HEK293 (cell line): ENCODE measurements at regions of chr16 and their contacts with region 1.

Region 1: DNA sequence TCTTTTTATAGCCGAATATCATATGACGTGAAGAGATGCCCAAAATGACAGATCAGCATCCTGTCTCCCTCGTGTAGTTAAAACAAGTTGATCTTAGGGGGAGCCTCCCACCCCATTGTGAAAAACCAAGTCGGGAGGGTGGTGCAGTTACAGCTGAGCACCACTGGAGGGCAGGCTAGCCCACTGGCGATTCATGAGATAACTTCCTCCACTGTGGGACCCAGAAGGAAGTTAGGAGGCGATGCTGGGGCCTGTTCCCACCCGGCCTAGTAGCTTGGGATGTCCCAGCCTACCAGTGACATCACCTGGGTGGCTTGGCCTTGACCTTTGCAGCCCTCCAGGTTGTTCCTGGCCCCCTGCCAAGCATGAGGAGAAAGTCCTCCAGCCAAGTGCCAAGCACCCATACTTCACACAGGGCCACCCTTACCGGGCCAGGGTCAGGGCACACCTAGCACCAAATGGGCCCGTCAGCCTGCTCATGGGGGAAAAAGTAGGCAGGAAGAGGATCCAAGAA is 8.1 kb upstream of the CPNE2 start:
- H3K4me3 ChIP-seq: no peak overlapping the region
- H3K27ac ChIP-seq: no peak overlapping the region
- H3K4me1 ChIP-seq: no peaks in the 10 kb centered on the region
- CTCF ChIP-seq: peak; percentile 90

Region 2: DNA sequence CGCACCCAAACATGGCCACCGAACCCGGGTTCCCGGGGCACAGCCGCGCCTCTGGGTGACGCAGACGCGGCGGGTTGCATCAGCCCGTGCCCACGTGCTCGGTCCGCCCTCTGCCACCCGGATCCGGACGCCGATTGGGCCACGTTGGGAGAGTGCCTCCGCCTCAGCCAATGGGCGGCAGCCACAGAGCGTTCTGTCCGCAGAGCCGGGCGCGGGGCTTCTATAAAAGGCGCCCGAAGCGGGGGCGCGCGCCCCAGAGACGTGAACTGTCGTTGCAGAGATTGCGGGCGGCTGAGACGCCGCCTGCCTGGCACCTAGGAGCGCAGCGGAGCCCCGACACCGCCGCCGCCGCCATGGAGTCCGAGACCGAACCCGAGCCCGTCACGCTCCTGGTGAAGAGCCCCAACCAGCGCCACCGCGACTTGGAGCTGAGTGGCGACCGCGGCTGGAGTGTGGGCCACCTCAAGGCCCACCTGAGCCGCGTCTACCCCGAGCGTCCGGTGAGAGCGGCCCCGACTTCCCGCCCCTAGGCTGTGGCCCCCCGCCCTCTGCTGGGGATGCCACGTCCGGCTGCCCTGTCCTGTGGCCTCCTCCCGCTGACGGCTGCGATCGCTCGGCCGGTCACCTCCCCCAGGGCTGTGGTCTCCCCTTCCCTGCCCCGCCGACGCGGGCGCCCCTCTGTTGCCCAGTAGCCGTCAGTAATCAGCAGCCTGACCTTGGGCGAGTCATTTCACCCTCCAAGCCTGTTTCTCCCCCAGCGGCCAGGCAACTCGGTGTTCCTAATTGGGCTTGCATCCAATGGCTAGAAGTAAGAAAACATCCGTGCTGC is 152.2 kb before region 1 on chr16 and contains the start of gene HERPUD1:
- CTCF ChIA-PET with region 1: no interaction called
- POLR2A ChIA-PET with region 1: no interaction called
- H3K4me3 ChIP-seq: peak within 1 kb of the TSS; percentile 67
- H3K27ac ChIP-seq: peak within 1 kb of the TSS; percentile 74
- H3K4me1 ChIP-seq: peaks cover 3% of the 10 kb centered on the region; the same call in 1 of the 2 replicates
- CTCF ChIP-seq: peak; percentile 74

Region 3: GRCh38 chr16:57066625-57067024 is 17.7 kb before region 1 on chr16:
- CTCF ChIA-PET with region 1: interaction called, 10 read pairs
- POLR2A ChIA-PET with region 1: no interaction called
- H3K4me3 ChIP-seq: no peak overlapping the region
- H3K27ac ChIP-seq: no peak overlapping the region
- H3K4me1 ChIP-seq: no peaks in the 10 kb centered on the region
- CTCF ChIP-seq: no peak

Region 4: DNA sequence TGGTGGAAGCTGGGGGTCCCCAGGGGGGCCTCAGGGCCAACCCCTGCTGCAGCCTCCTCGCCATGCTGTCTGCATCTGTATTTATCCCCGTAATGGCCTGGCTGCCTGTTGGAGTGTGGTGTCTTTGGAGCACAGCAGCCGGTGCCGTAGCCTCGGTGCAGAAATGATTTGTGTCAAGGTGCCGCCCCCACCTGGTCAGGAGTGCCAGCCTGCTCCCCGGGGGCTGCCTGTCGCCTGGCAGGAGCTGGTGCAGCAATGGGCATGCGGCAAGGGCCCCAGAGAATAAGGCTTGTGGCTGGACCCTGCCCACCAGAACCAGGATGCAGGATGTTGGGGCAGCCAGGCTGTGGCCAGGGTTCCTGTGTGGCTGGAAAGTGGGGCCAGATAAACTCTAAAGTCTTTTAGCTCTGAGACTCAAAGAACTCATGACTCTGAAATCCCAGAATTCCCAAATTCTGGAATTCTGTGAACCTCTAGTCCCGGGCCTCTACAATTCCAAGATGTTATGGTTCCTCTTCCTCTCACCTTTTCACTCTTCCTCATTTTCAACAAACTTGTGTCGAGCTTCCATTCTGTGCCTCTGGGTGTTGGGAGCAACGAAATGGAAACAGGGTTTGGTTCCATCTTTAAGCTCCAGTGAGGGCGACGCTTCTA is 14.0 kb after region 1 on chr16:
- CTCF ChIA-PET with region 1: interaction called, 24 read pairs
- POLR2A ChIA-PET with region 1: interaction called, 4 read pairs
- H3K4me3 ChIP-seq: no peak overlapping the region
- H3K27ac ChIP-seq: no peak overlapping the region
- H3K4me1 ChIP-seq: no peaks in the 10 kb centered on the region
- CTCF ChIP-seq: no peak

Region 5: GRCh38 chr16:57127037-57127763 is 42.9 kb after region 1 on chr16:
- CTCF ChIA-PET with region 1: interaction called, 12 read pairs
- POLR2A ChIA-PET with region 1: no interaction called
- H3K4me3 ChIP-seq: no peak overlapping the region
- H3K27ac ChIP-seq: no peak overlapping the region
- H3K4me1 ChIP-seq: no peaks in the 10 kb centered on the region
- CTCF ChIP-seq: no peak

Region 6: DNA sequence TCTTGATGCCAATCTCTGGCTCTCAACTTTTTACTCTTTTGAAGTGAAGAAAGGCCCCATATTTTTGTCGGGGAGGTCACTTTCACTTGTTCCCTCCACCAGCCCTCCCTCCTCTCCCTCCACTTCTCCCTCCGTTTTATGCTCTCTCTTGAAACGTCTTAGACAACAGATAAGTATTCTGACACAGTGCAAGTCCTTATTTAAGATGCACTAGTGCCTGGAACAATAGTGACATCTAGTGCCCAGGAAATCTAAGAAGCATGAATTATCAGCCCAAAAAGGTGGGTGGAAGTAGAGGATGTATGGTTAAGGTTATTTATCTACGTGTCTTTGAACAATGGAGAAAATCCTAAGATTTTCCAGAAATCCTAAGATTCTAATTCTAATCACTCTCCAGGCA is 83.6 kb after region 1 on chr16:
- CTCF ChIA-PET with region 1: interaction called, 17 read pairs
- POLR2A ChIA-PET with region 1: no interaction called
- H3K4me3 ChIP-seq: no peak overlapping the region
- H3K27ac ChIP-seq: no peak overlapping the region
- H3K4me1 ChIP-seq: no peaks in the 10 kb centered on the region
- CTCF ChIP-seq: peak; percentile 72

Region 7: GRCh38 chr16:57260294-57260929 is 176.1 kb after region 1 on chr16:
- CTCF ChIA-PET with region 1: no interaction called
- POLR2A ChIA-PET with region 1: no interaction called
- H3K4me3 ChIP-seq: no peak overlapping the region
- H3K27ac ChIP-seq: no peak overlapping the region
- H3K4me1 ChIP-seq: no peaks in the 10 kb centered on the region
- CTCF ChIP-seq: no peak

Region 8: DNA sequence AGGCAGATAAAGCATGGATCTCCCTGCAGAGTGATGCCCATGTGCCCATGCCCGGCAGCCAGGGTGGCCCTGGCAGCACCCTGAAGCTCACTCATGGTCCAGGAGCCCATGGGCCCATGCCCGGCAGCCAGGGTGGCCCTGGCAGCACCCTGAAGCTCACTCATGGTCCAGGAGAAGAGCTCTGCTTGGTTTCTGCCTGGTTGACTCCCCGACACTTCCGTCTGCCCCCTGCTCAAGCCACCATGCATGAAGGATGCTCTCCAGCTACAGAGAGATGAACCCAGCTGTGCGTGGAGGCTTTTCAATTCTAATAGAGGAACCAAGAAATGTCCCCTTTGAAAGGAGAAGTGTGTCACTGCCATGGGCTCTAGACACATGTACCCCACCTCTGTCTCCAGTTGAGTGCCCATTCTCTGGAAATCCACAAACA is 329.0 kb after region 1 on chr16:
- CTCF ChIA-PET with region 1: interaction called, 24 read pairs
- POLR2A ChIA-PET with region 1: no interaction called
- H3K4me3 ChIP-seq: no peak overlapping the region
- H3K27ac ChIP-seq: no peak overlapping the region
- H3K4me1 ChIP-seq: no peaks in the 10 kb centered on the region
- CTCF ChIP-seq: no peak